Activated T-helper 1 cell treated with anti-CD3 and anti-CD28 coated beads, Interleukin-12 subunit alpha, Interleukin-12 subunit beta, Interleukin-2, Interleukin-4 antibody, amounts not matched to agents 30 ng/mL and 10 ng/mL and 1 ng/mL, durations not matched to agents 14 hours and 24 hours and 36 hours (primary cell): ENCODE measurements at regions of chr10 and their contacts with region 1.

Region 1: DNA sequence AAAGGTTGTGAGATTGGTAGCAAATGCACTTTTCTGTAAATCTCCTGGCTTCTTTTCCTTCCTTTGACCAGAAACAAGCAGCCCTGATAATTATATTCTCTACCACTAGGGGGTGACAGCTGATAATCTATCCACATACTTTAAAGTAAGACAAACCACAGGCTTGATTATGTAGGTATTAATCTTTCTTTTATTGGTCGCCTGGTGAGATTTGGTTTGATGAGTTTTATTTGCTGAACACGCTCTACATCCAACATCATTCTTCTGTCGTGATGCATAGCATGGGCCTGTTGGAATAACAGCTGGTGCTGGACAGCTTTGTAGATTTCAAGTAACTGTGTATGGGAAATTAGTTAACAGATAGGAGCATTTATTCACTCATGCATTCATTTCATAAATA is 63.5 kb downstream of the ZNF365 start:
- DNase-seq: no peak
- H3K4me3 Mint-ChIP-seq: no peak overlapping the region
- H3K27ac Mint-ChIP-seq: no peak overlapping the region
- H3K4me1 Mint-ChIP-seq: peaks cover 12% of the 10 kb centered on the region
- H3K27me3 Mint-ChIP-seq: peaks cover 15% of the 10 kb centered on the region

Region 2: DNA sequence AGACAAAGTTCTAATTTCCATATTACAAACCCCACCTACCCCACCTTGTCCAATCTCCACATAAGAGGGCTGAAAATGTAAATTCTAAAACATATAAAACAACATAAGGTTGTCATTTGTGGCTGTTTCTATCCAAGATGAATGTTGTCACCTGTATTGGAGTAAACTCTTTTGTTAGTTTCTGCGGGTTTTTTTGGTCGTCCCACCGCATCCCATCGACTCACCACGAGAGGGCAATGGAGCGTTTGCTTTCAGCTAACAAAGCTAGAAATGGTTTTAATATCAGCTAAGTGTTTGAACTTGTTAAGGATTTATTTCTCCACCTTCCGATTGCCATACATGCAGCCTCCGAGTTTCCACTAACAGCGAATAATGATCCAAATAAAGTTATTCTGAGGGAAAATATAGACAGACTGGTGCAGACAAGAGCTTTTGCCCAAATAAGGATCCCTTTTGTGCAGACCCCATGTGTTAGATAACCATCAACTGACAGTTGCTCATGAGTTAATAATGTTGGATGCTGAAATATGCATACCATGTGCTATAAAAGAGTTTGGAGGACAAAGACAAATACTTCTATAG is 399.0 kb before region 1 on chr10:
- intact Hi-C with region 1: loop called (anchors 5 kb)
- DNase-seq: peak; percentile 72
- H3K4me3 Mint-ChIP-seq: peak overlapping the region; percentile 73
- H3K27ac Mint-ChIP-seq: peak overlapping the region; percentile 89
- H3K4me1 Mint-ChIP-seq: peaks cover 95% of the 10 kb centered on the region
- H3K27me3 Mint-ChIP-seq: no peaks in the 10 kb centered on the region

Region 3: DNA sequence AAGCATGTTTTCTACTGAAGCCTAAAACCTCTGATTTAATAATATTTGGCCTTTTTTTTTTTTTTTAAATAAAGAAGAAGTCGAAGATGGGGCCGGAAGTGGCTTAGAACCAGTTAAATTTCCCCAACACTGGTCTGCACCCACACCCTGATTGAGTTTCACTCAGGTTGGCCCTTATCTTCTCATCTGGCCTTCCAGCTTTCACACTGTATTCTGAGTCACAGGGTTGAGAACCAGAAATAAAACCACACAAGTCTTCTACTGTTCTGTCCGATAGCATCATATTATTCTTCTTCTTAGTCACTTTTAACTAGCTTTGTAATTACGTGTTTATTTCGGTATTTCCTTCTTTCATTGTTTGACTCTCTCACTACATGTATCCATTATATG is 53.6 kb before region 1 on chr10:
- intact Hi-C with region 1: loop called (anchors 2 kb)
- DNase-seq: peak; percentile 11
- H3K4me3 Mint-ChIP-seq: no peak overlapping the region
- H3K27ac Mint-ChIP-seq: no peak overlapping the region
- H3K4me1 Mint-ChIP-seq: peaks cover 7% of the 10 kb centered on the region
- H3K27me3 Mint-ChIP-seq: peaks cover 24% of the 10 kb centered on the region

Region 4: GRCh38 chr10:62851442-62851841 is 413.7 kb after region 1 on chr10:
- intact Hi-C with region 1: loop called (anchors 10 kb)
- DNase-seq: no peak
- H3K4me3 Mint-ChIP-seq: no peak overlapping the region
- H3K27ac Mint-ChIP-seq: peak overlapping the region; percentile 9
- H3K4me1 Mint-ChIP-seq: peaks cover 51% of the 10 kb centered on the region
- H3K27me3 Mint-ChIP-seq: peaks cover 5% of the 10 kb centered on the region

Region 5: DNA sequence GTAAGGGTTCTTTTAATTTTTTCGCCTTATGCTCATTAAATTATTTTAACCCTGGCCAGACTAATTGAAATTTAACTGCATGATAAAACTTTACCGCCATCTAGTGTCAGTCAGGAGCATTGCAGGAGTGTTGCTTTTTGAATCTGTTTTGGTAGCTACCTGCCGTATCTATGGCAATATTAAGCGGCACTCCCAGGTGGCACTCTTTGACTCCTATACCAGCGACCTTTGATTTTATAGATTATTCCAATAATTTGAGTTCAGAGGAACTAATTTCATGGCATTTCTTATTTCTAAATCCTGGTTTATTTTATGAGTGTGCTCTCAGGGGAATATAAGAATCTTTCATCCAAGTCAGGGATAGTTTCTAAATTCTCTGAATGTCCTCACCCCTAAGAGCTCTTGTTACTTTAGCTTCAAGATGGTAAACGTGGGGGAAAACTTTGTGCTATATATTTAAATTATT is 1282.4 kb after region 1 on chr10:
- intact Hi-C with region 1: loop called (anchors 10 kb)
- DNase-seq: peak; percentile 17
- H3K4me3 Mint-ChIP-seq: peak overlapping the region; percentile 51
- H3K27ac Mint-ChIP-seq: no peak overlapping the region
- H3K4me1 Mint-ChIP-seq: peaks cover 34% of the 10 kb centered on the region
- H3K27me3 Mint-ChIP-seq: peaks cover 4% of the 10 kb centered on the region